Spleen (tissue), 13 donors: ENCODE measurements at regions of chrX and their contacts with region 1.

Region 1: DNA sequence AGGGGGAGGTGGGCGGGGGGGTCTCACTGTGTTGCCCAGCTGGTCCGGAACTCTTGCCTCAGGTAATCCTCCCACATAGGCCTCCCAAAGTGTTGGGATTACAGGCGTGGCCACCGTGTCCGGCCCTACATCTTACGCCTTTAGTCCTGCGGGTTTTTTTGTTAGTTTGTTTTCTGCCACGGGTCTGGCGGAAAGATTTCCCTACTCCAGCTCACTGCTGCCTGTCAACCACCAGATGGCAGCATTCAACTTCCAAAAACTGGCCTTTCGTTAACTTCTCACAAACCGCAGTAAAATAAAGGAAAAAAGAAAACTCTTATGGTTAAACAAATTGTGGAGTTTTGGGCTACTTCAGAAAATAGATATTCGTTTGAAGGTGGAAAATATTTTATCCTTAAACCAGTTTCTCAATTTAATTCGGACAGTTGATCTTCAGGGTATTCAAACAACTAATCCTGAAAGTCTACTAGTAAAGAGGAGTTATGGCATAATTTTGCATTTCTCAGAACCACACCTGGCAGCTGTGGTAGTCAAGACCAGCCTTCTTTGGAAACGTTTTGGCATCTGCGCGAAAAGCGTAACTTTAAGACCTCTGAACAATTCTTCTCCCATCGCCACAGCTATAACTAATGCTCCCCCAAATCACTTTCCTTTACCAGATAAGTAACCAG is 41.1 kb downstream of the LUZP4 start:
- DNase-seq: no peak
- H3K4me3 ChIP-seq: no peak overlapping the region
- H3K27ac ChIP-seq: no peak overlapping the region
- H3K4me1 ChIP-seq: peaks cover 0 to 3% (median 0%) of the 10 kb centered on the region in 6 donors
- H3K27me3 ChIP-seq: peaks cover 0 to 24% (median 0%) of the 10 kb centered on the region in 7 donors
- CTCF ChIP-seq: peak; percentile 8 to 85 (median 72)
- POLR2A ChIP-seq: no peak

Region 2: GRCh38 chrX:115642895-115643530 is 312.4 kb after region 1 on chrX:
- intact Hi-C with region 1: loop called (anchors 5 kb)
- DNase-seq: no peak
- H3K4me3 ChIP-seq: no peak overlapping the region
- H3K27ac ChIP-seq: peak overlapping the region in 2 of 8 donors; percentile 11 to 21
- H3K4me1 ChIP-seq: peaks cover 0 to 6% (median 0%) of the 10 kb centered on the region in 6 donors
- H3K27me3 ChIP-seq: peaks cover 0 to 8% (median 0%) of the 10 kb centered on the region in 7 donors
- CTCF ChIP-seq: peak; percentile 64 to 96 (median 83)
- POLR2A ChIP-seq: no peak